ENCODE measurements at regions of chr10 and their contacts with region 1.

Region 1: GRCh38 chr10:47311932-47312662 is 10.2 kb upstream of the GDF2 start:
- DNase-seq: peak; percentile 62 to 89 (median 82)
- ATAC-seq: peak; percentile 77
- H3K4me3 ChIP-seq: no peak overlapping the region
- H3K4me3 Mint-ChIP-seq: peak overlapping the region; percentile 61
- H3K27ac ChIP-seq: peak overlapping the region; percentile 6 to 10
- H3K27ac Mint-ChIP-seq: peak overlapping the region; percentile 85
- H3K4me1 ChIP-seq: peaks cover 29% of the 10 kb centered on the region
- H3K4me1 Mint-ChIP-seq: peaks cover 36% of the 10 kb centered on the region
- H3K27me3 ChIP-seq: no peaks in the 10 kb centered on the region
- H3K27me3 Mint-ChIP-seq: no peaks in the 10 kb centered on the region
- CTCF ChIP-seq: peak; percentile 92

Region 2: GRCh38 chr10:47024399-47025252 is 287.5 kb before region 1 on chr10:
- CTCF ChIA-PET with region 1: interaction called, 163 read pairs
- POLR2A ChIA-PET with region 1: interaction called, 8 read pairs
- intact Hi-C with region 1: loop called (anchors 1 kb)
- DNase-seq: peak; percentile 19 to 81 (median 67)
- ATAC-seq: peak; percentile 75
- H3K4me3 ChIP-seq: no peak overlapping the region
- H3K4me3 Mint-ChIP-seq: no peak overlapping the region
- H3K27ac ChIP-seq: no peak overlapping the region
- H3K27ac Mint-ChIP-seq: no peak overlapping the region
- H3K4me1 ChIP-seq: no peaks in the 10 kb centered on the region
- H3K4me1 Mint-ChIP-seq: peaks cover 4% of the 10 kb centered on the region
- H3K27me3 ChIP-seq: peaks cover 0 to 5% of the 10 kb centered on the region in 2 experiments
- H3K27me3 Mint-ChIP-seq: peaks cover 5% of the 10 kb centered on the region
- CTCF ChIP-seq: peak; percentile 90

Region 3: GRCh38 chr10:47165711-47166524 is 146.2 kb before region 1 on chr10:
- CTCF ChIA-PET with region 1: interaction called, 12 read pairs
- POLR2A ChIA-PET with region 1: interaction called, 11 read pairs
- intact Hi-C with region 1: loop called in 1 of 2 experiments (anchors 10 kb)
- DNase-seq: peak in 8 of 9 experiments; percentile 34 to 79 (median 52)
- ATAC-seq: peak; percentile 85
- H3K4me3 ChIP-seq: peak overlapping the region; percentile 48 to 73
- H3K4me3 Mint-ChIP-seq: peak overlapping the region; percentile 85
- H3K27ac ChIP-seq: peak overlapping the region; percentile 74 to 79
- H3K27ac Mint-ChIP-seq: peak overlapping the region; percentile 98
- H3K4me1 ChIP-seq: peaks cover 23% of the 10 kb centered on the region
- H3K4me1 Mint-ChIP-seq: peaks cover 31% of the 10 kb centered on the region
- H3K27me3 ChIP-seq: no peaks in the 10 kb centered on the region
- H3K27me3 Mint-ChIP-seq: no peaks in the 10 kb centered on the region
- CTCF ChIP-seq: no peak

Region 4: DNA sequence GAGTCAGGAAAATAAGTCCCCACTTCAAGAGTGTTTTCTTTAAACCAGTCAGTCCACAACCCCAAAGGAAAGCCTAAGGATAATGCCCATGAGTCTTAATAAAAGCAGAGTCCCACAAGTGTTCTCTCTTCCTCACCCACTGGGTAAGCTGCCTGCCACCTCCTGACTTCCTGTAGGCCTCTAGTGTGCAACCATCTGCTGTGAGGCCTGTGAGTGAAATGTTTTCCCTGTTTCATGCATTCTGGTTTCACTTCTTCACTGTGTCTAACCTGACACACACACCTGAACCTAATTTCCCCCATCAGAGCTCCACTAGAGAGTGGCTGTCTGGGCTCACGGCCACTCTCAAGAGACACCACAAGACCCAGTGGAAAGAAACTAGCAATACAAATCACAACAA is 51.0 kb before region 1 on chr10:
- CTCF ChIA-PET with region 1: interaction called, 10 read pairs
- POLR2A ChIA-PET with region 1: no interaction called
- intact Hi-C with region 1: loop called in 1 of 2 experiments (anchors 2 kb)
- DNase-seq: peak in 7 of 9 experiments; percentile 17 to 68 (median 46)
- ATAC-seq: peak; percentile 53
- H3K4me3 ChIP-seq: no peak overlapping the region
- H3K4me3 Mint-ChIP-seq: peak overlapping the region; percentile 23
- H3K27ac ChIP-seq: peak overlapping the region; percentile 18 to 75
- H3K27ac Mint-ChIP-seq: peak overlapping the region; percentile 95
- H3K4me1 ChIP-seq: peaks cover 88% of the 10 kb centered on the region
- H3K4me1 Mint-ChIP-seq: peaks cover 95% of the 10 kb centered on the region
- H3K27me3 ChIP-seq: no peaks in the 10 kb centered on the region
- H3K27me3 Mint-ChIP-seq: no peaks in the 10 kb centered on the region
- CTCF ChIP-seq: no peak

Region 5: GRCh38 chr10:47287365-47287802 is 24.7 kb before region 1 on chr10:
- CTCF ChIA-PET with region 1: interaction called, 11 read pairs
- POLR2A ChIA-PET with region 1: no interaction called
- intact Hi-C with region 1: no loop called
- DNase-seq: no peak
- ATAC-seq: no peak
- H3K4me3 ChIP-seq: no peak overlapping the region
- H3K4me3 Mint-ChIP-seq: no peak overlapping the region
- H3K27ac ChIP-seq: no peak overlapping the region
- H3K27ac Mint-ChIP-seq: peak overlapping the region; percentile 75
- H3K4me1 ChIP-seq: peaks cover 26% of the 10 kb centered on the region
- H3K4me1 Mint-ChIP-seq: peaks cover 37% of the 10 kb centered on the region
- H3K27me3 ChIP-seq: no peaks in the 10 kb centered on the region
- H3K27me3 Mint-ChIP-seq: no peaks in the 10 kb centered on the region
- CTCF ChIP-seq: no peak

Region 6: GRCh38 chr10:47340608-47341170 is 28.6 kb after region 1 on chr10:
- CTCF ChIA-PET with region 1: interaction called, 11 read pairs
- POLR2A ChIA-PET with region 1: no interaction called
- intact Hi-C with region 1: no loop called
- DNase-seq: peak; percentile 52 to 82 (median 70)
- ATAC-seq: peak; percentile 77
- H3K4me3 ChIP-seq: no peak overlapping the region
- H3K4me3 Mint-ChIP-seq: no peak overlapping the region
- H3K27ac ChIP-seq: no peak overlapping the region
- H3K27ac Mint-ChIP-seq: no peak overlapping the region
- H3K4me1 ChIP-seq: no peaks in the 10 kb centered on the region
- H3K4me1 Mint-ChIP-seq: no peaks in the 10 kb centered on the region
- H3K27me3 ChIP-seq: no peaks in the 10 kb centered on the region
- H3K27me3 Mint-ChIP-seq: peaks cover 3% of the 10 kb centered on the region
- CTCF ChIP-seq: peak; percentile 97